Activated naive CD4-positive, alpha-beta T cell treated with anti-CD3 and anti-CD28 coated beads, Interleukin-2, amount 10 ng/mL, durations not matched to agents 7 days and 5 days (primary cell): ENCODE measurements at regions of chr17 and their contacts with region 1.

Region 1: GRCh38 chr17:82781894-82782274 is 30.0 kb downstream of the TBCD start:
- DNase-seq: peak; percentile 91
- H3K4me3 Mint-ChIP-seq: no peak overlapping the region
- H3K27ac Mint-ChIP-seq: no peak overlapping the region
- H3K4me1 Mint-ChIP-seq: peaks cover 17% of the 10 kb centered on the region
- H3K27me3 Mint-ChIP-seq: no peaks in the 10 kb centered on the region

Region 2: DNA sequence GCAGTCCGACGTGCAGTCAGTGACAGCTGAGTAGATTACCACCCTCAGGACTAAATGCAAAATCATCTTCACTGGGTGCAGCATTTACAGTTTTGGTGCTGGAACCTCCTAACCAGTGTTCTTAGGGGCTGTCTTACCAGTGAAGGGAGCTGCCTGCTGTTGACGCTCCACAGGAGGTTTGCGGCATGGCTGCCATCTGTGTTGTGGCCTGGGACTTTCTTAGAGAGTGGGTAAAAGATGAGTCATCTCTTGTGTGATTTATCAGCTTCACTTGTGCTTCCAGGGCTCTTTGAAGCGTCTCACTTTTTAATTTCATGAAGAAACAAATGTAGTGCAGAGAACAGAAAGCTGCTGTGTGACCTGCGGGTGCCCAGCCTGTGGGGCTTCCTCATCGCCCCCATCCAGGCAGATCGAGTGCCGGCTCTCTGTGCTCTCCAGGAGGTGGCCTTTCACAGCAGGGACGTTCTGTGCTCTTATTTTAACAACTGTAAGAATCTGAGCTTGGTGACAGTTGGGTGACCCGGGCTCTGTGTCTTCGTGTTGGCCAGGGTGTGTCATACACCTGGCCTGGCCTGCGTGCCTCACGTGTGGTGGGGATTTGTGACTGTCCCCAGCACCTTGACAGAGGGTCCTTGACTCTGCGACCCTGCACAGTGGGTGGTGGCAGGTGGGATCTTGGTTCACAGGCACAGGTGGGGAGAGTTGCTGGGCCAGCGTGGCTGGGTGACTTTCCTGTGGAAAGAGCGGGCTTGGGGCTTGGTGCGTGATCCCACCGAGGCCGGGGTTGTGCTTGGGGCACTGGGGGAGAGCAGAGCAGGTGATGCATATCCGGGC is 82.3 kb after region 1 on chr17:
- CTCF ChIA-PET with region 1: interaction called, 16 read pairs
- DNase-seq: peak; percentile 95
- H3K4me3 Mint-ChIP-seq: peak overlapping the region; percentile 77
- H3K27ac Mint-ChIP-seq: peak overlapping the region; percentile 99
- H3K4me1 Mint-ChIP-seq: peaks cover 72% of the 10 kb centered on the region
- H3K27me3 Mint-ChIP-seq: no peaks in the 10 kb centered on the region

Region 3: GRCh38 chr17:82875407-82875891 is 93.6 kb after region 1 on chr17:
- CTCF ChIA-PET with region 1: no interaction called
- DNase-seq: no peak
- H3K4me3 Mint-ChIP-seq: no peak overlapping the region
- H3K27ac Mint-ChIP-seq: no peak overlapping the region
- H3K4me1 Mint-ChIP-seq: peaks cover 39% of the 10 kb centered on the region
- H3K27me3 Mint-ChIP-seq: no peaks in the 10 kb centered on the region

Region 4: GRCh38 chr17:82913295-82914042 is 131.6 kb after region 1 on chr17:
- CTCF ChIA-PET with region 1: interaction called, 17 read pairs
- DNase-seq: no peak
- H3K4me3 Mint-ChIP-seq: no peak overlapping the region
- H3K27ac Mint-ChIP-seq: no peak overlapping the region
- H3K4me1 Mint-ChIP-seq: peaks cover 51% of the 10 kb centered on the region
- H3K27me3 Mint-ChIP-seq: no peaks in the 10 kb centered on the region

Region 5: DNA sequence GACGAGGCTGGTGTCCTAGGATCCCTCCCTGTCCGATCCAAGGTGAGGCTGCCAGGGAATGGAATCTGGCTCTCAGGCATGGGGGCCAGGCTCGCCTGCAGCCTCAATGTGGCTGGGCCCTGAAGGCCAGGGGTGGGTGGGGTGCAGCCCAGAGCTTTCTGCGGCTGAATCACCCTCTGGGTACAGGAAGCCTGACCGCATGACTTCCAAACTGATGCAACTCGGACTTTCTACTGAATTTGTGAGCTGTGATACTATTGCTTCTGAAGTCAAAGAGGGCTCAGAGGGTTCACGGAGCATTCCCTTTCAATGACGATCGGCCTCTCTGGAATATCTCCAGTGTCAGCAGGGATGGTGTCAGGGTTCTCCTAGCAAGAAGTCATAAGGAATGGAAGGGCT is 421.2 kb after region 1 on chr17:
- CTCF ChIA-PET with region 1: interaction called, 10 read pairs
- DNase-seq: peak; percentile 18
- H3K4me3 Mint-ChIP-seq: no peak overlapping the region
- H3K27ac Mint-ChIP-seq: no peak overlapping the region
- H3K4me1 Mint-ChIP-seq: peaks cover 45% of the 10 kb centered on the region
- H3K27me3 Mint-ChIP-seq: peaks cover 24% of the 10 kb centered on the region